Left cardiac atrium (tissue), 4 donors: ENCODE measurements at regions of chr5 and their contacts with region 1.

Region 1: DNA sequence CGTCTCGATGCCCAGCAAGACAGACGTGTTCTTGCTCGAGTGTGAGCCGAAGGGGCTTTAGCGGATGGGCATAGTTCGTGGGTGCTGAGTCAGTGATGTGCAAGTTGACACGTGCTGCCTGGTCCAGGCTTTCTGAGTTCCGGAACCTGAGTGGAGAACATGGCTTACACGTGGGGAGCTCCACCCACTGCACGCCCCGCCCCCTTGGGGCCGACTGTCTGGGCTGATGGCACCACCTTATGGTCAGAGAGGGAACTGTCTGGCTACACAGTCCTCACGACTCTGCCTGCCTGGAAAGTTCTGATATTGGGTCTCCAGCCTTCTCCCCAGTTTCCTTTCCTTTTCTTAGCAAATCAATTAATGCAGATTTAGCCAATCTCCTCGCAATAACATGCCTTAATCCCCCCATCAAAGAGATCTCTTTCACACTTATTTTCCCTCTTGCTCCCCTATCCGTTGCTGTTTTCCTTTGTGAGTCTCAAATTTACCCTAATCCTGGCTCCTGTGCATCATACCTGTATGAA is 3.8 kb upstream of the STC2 start:
- DNase-seq: peak; percentile 92
- ATAC-seq: peak; percentile 73 to 82

Region 2: DNA sequence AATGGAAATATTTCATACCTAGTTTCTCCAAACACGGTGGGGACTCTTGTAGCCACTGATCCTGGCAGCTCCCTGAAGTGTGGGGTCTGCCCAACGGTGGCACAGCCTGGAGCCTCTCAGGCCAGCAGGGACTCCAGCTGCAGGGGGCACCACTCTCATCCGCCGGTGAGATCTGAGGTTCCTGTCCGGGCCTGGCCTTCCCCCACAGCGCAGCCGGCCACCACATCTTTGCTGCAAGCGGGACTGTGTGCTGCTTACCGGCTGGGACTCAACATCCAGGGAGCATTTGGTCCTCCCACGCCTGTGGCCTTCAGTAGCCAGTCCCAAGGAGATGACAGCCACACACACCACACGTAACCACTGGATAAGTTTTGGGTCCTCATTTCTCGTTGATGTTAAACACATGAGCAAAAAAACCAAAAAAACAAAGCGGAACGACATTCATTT is 89.3 kb before region 1 on chr5:
- intact Hi-C with region 1: loop called in 1 of 2 experiments (anchors 10 kb)
- DNase-seq: no peak
- ATAC-seq: peak; percentile 46 to 50

Region 3: DNA sequence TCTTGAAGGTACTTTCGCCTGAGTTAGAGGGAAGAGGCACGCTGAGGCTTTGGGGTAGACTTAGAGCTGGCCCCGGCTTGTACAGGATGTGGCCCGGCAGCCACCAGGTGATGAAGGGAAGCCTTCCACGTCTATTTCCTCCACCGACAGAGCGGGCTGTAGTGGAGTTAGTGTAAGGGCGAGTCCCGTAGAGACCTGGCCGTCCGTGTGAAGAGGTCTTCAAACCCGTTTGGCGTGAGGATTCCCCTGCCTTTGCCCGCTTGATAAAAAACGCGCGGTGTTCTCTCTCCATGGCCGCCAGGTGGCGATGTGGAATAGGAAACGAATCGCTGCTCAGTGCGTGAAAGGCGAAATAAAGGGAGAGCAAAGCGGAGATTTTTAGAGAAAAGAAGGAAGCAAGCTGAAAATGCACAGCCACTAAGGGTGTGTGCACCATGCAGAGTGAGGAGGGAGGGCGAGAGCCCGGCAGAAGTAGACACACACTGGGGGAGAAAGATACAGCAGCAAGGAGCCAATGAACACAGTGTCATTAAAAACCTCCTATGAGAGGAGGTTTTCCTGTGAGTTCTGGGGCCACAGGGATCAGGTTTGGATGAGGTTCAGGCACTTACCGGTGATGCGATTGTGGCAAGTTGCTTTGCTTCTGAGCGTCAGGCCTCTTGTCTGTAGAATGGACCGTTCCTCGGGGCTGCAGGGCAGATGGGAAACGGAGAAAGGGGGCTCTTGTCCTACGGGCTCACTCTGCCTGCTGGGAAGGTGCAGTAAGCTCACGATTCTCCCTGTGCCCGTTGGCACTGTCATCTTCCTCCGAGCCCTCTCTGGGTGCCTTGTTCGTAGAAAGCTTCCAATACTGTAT is 38.0 kb before region 1 on chr5:
- intact Hi-C with region 1: loop called (anchors 1 to 5 kb)
- DNase-seq: peak; percentile 78
- ATAC-seq: peak; percentile 48 to 67

Region 4: DNA sequence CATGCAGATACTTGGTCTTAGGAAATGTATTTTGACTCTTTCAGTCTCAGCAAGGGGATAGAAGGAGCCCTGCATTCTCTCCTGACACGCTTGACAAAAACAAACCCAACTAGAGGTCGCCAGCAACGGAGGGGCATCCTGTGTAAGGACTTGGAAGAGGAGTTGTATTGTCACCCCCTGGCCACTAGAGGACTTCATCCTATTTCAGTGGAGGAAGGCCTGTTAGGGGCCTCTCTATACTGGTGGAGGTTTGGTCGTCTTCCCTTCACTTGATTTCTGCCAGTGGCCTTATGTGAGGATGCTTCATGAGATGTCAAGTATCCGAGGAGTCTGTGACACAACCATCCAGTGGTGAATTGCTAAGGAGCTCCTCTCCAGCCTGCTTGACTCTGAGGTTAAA is 119.0 kb after region 1 on chr5:
- intact Hi-C with region 1: loop called in 1 of 2 experiments (anchors 10 kb)
- DNase-seq: no peak
- ATAC-seq: no peak

Region 5: DNA sequence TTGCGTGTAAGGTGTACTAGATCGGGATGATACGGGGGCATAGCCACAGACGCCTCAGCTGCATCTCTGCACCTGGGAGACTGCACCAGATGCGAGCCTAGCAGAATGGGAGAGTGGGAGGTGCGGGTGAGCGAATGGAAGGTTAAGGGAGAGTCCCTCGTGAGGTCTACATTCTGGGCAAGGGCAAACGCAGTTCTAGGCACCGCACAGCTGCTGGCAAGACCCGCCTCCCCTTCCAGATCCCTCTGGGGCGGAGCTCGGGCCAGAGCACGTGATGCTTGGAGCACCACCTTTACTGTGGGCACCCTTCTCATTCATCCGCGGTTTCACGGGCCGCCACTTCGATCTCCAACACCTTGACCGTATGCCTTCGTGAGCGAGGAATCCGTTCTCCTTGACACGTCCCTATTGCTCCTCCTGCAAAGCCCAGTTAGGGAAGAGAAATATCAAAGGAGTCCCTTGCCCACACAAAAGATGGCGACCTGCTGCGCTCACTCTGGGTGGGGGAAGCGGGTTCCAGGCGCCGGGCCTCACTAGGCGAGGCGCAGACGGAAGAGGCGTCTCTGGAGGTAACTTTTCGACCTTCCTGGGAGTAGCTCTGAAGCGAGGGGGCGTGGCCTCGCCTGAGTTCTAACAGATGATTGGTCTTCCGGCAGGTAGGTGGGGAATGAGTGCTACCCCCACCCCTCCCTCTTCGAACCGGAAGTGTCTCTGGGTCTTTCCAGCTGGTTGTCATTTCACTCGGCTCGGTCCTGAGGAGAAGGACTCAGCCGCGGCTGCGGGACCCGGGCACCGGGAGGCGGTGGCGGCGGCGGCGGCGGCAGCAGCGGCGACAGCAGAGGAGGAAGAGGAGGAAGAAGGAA is 555.8 kb after region 1 on chr5 and contains the start of gene CPEB4:
- intact Hi-C with region 1: no loop called
- DNase-seq: peak; percentile 99
- ATAC-seq: peak; percentile 97 to 98
- total RNA-seq, gene CPEB4: 73.8 to 178 TPM

Region 6: GRCh38 chr5:174188295-174188694 is 856.3 kb after region 1 on chr5:
- intact Hi-C with region 1: no loop called
- DNase-seq: peak; percentile 39
- ATAC-seq: peak in 1 of 2 donors; percentile 47